CD4-positive, alpha-beta T cell (primary cell): ENCODE measurements at regions of chr10 and their contacts with region 1.

Region 1: DNA sequence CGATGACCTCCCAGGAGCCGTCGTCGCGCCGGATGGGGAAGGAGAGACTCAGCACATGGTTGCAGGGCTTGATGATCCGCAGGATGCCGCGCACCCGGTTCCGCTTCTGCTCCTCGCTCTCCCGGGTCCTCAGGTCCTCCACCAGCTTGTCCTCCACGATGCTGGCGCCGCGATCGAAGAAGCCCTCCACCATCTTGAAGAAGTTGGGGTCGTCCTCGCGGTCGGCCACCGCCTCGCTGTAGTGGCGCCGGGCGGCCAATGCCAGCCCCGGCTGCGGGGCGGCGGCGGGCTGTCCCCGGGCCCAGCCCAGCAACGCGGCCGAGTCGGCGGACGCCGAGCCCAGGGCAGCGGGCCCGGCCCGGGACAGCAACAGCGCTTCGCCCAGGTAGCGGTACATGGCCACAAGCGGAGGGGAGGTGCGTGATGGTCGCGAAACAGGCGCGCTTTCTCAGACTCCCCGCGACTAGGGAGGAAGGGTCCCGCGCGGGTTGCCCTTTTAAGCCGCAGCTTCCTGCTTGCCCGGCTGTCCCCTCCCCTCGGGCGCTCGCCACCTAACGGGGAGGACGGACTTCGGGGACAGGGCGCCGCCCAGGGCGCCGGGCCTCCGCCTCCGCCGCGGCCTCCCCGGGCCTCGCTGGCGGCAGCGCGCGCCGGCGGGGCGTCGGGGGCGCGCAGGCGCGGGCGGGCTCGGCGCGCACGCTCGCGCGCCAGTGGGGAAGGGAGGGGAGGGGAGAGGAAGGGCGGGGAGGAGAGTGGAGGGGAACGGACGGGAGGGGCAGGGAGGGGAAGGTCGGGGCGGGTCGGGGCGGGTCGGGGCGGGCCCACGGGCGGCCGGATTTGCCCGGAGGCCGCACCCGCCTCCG is at the starts of genes GLUD1 and SHLD2:
- DNase-seq: peak; percentile 75 to 95 (median 84)
- ATAC-seq: peak; percentile 57
- H3K4me3 ChIP-seq: peak within 1 kb of the TSS; percentile 78
- H3K4me3 Mint-ChIP-seq: peak within 1 kb of the TSS; percentile 96
- H3K27ac ChIP-seq: peak within 1 kb of the TSS; percentile 69 to 93
- H3K27ac Mint-ChIP-seq: peak within 1 kb of the TSS; percentile 94
- H3K4me1 ChIP-seq: peaks cover 24% of the 10 kb centered on the region
- H3K4me1 Mint-ChIP-seq: peaks cover 61% of the 10 kb centered on the region
- H3K27me3 ChIP-seq: no peaks in the 10 kb centered on the region
- H3K27me3 Mint-ChIP-seq: no peaks in the 10 kb centered on the region
- CTCF ChIP-seq: no peak
- total RNA-seq, gene GLUD1: 81.0 to 82.4 TPM
- total RNA-seq, gene SHLD2: 20.6 to 23.0 TPM

Region 2: DNA sequence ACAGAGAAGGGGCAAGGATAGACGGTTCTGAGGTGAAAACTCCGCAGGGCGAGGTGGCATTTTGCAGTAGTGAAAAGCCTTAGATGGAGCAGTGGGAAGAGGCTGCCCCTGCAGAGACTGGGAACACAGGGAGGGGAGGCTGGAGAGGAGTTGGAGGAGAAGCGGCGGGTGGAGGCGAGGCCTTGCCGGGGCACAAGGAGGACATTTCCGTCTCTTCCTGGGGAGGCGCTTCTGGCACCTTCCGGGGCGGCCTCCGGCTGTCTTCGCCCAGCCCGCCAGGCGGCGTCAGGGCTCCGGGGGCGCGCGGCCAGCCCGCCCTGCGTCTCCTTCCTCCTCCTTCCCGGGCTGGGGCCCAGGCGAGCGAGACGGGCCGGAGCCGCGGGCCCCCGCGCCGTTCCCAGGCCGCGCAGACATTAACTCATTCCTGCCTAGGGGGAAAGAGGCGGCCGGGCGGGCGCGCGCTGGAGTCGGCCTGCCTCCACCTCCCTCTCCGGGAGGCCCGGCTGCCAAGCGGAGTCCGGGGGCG is 383.6 kb before region 1 on chr10:
- CTCF ChIA-PET with region 1: no interaction called
- POLR2A ChIA-PET with region 1: no interaction called
- intact Hi-C with region 1: loop called in 1 of 2 experiments (anchors 5 kb)
- DNase-seq: peak; percentile 68 to 93 (median 82)
- ATAC-seq: peak; percentile 95
- H3K4me3 ChIP-seq: peak overlapping the region; percentile 67
- H3K4me3 Mint-ChIP-seq: peak overlapping the region; percentile 95
- H3K27ac ChIP-seq: peak overlapping the region; percentile 78 to 81
- H3K27ac Mint-ChIP-seq: peak overlapping the region; percentile 95
- H3K4me1 ChIP-seq: peaks cover 17% of the 10 kb centered on the region
- H3K4me1 Mint-ChIP-seq: peaks cover 20% of the 10 kb centered on the region
- H3K27me3 ChIP-seq: no peaks in the 10 kb centered on the region
- H3K27me3 Mint-ChIP-seq: no peaks in the 10 kb centered on the region
- CTCF ChIP-seq: peak; percentile 77

Region 3: DNA sequence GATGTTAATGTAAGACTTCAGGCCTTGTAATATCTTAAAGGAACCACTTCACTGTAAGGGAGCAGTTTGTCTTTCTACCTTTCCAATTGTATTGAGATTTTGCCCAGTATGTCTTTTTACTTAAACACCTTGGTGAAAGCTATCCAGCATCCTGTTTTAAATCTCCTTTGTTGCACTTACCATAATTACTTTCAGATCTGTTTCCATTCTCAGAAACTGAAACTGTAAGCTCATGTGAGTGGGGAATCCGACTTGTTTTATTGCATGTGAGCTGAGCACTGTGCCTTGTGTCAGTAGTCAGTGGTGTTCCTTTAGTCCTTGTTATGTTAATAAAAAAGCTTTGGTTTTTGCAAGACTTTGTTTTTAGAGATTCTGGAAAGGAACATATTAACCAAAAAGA is 296.0 kb before region 1 on chr10:
- CTCF ChIA-PET with region 1: no interaction called
- POLR2A ChIA-PET with region 1: no interaction called
- intact Hi-C with region 1: no loop called
- DNase-seq: peak in 2 of 14 experiments; percentile 1 to 25
- ATAC-seq: no peak
- H3K4me3 ChIP-seq: no peak overlapping the region
- H3K4me3 Mint-ChIP-seq: no peak overlapping the region
- H3K27ac ChIP-seq: no peak overlapping the region
- H3K27ac Mint-ChIP-seq: no peak overlapping the region
- H3K4me1 ChIP-seq: no peaks in the 10 kb centered on the region
- H3K4me1 Mint-ChIP-seq: peaks cover 5% of the 10 kb centered on the region
- H3K27me3 ChIP-seq: no peaks in the 10 kb centered on the region
- H3K27me3 Mint-ChIP-seq: no peaks in the 10 kb centered on the region
- CTCF ChIP-seq: no peak

Region 4: GRCh38 chr10:86992451-86992850 is 102.2 kb before region 1 on chr10:
- CTCF ChIA-PET with region 1: no interaction called
- POLR2A ChIA-PET with region 1: no interaction called
- intact Hi-C with region 1: no loop called
- DNase-seq: no peak
- ATAC-seq: no peak
- H3K4me3 ChIP-seq: no peak overlapping the region
- H3K4me3 Mint-ChIP-seq: no peak overlapping the region
- H3K27ac ChIP-seq: no peak overlapping the region
- H3K27ac Mint-ChIP-seq: no peak overlapping the region
- H3K4me1 ChIP-seq: no peaks in the 10 kb centered on the region
- H3K4me1 Mint-ChIP-seq: no peaks in the 10 kb centered on the region
- H3K27me3 ChIP-seq: peaks cover 0 to 8% of the 10 kb centered on the region in 2 experiments
- H3K27me3 Mint-ChIP-seq: peaks cover 24% of the 10 kb centered on the region
- CTCF ChIP-seq: no peak